ENCODE measurements at regions of chr3 and their contacts with region 1.

Region 1: DNA sequence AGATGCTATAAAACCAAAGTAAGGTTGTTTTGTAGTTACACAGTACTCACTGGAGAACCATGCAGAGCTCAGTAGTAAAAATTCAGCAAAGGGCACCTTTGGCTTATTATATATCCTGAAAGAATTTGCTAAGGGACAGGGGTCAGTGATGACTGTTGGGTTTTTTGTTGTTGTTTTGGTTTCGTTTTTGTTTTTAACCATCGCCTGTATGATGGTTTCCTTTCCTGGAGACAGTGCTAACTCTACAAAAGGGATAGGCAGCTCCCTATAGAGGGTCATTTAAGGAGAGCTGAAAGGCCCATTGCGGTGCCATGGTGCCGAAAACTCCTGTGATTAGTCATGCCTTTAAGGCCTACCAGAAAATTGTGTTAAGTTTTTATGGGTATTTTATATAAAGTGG is 118.2 kb upstream of the GOLIM4 start:
- DNase-seq: no peak
- ATAC-seq: no peak
- H3K4me3 Mint-ChIP-seq: no peak overlapping the region
- H3K27ac Mint-ChIP-seq: no peak overlapping the region
- H3K4me1 Mint-ChIP-seq: peaks cover 4% of the 10 kb centered on the region
- H3K27me3 Mint-ChIP-seq: no peaks in the 10 kb centered on the region
- CTCF ChIP-seq: no peak

Region 2: GRCh38 chr3:167318991-167319615 is 894.8 kb before region 1 on chr3:
- CTCF ChIA-PET with region 1: no interaction called
- POLR2A ChIA-PET with region 1: no interaction called
- intact Hi-C with region 1: no loop called
- DNase-seq: no peak
- ATAC-seq: no peak
- H3K4me3 Mint-ChIP-seq: no peak overlapping the region
- H3K27ac Mint-ChIP-seq: no peak overlapping the region
- H3K4me1 Mint-ChIP-seq: no peaks in the 10 kb centered on the region
- H3K27me3 Mint-ChIP-seq: no peaks in the 10 kb centered on the region
- CTCF ChIP-seq: no peak

Region 3: DNA sequence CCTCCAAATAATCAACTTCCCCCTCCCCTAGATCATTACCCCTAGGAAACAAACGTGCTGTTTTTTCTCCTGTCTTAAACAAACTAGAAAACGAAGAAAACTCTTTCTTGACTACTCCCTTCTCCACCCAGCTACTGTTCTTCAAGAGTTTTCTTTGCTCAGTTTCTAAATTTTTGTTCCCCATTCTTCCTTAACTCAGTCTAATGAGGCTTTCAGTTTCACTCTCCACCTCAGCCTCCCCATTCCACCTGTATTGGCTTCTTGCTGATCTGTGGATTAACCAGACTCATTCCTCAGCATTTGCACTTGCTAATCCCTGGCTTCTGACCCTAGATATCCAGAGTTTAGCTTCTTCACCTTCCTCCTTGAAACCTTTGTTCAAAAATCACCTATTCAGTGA is 451.6 kb before region 1 on chr3:
- CTCF ChIA-PET with region 1: no interaction called
- POLR2A ChIA-PET with region 1: no interaction called
- intact Hi-C with region 1: no loop called
- DNase-seq: no peak
- ATAC-seq: no peak
- H3K4me3 Mint-ChIP-seq: peak overlapping the region; percentile 39
- H3K27ac Mint-ChIP-seq: peak overlapping the region; percentile 74
- H3K4me1 Mint-ChIP-seq: peaks cover 11% of the 10 kb centered on the region
- H3K27me3 Mint-ChIP-seq: no peaks in the 10 kb centered on the region
- CTCF ChIP-seq: no peak

Region 4: DNA sequence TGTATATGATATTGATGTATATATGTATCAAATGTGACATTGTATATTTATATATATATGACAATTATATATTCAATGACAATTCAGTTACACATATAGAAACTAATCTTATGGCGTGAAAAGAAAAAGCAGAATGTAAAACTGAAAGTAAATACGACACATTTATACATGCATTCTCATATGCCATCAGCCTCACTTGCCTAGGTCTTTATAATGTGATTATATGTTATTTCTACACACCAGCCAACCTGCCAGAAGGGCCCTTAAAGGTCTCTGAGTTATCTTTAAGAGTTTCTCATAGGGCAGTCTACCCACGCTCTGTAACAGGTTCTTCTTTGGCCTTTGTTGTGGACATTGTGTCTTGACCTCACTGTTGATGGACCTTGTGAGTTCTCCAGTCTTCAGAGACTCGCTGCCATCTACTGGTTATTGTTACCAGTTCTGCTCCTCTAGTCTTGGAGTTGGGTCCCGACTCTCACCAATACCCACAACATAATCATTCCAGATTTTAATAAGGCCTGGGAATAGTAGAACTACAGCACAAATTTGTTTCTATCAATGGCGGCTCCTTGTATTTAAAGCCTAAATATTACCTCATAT is 253.3 kb after region 1 on chr3:
- CTCF ChIA-PET with region 1: no interaction called
- POLR2A ChIA-PET with region 1: no interaction called
- intact Hi-C with region 1: loop called (anchors 5 kb)
- DNase-seq: no peak
- ATAC-seq: no peak
- H3K4me3 Mint-ChIP-seq: peak overlapping the region; percentile 20
- H3K27ac Mint-ChIP-seq: no peak overlapping the region
- H3K4me1 Mint-ChIP-seq: peaks cover 4% of the 10 kb centered on the region
- H3K27me3 Mint-ChIP-seq: no peaks in the 10 kb centered on the region
- CTCF ChIP-seq: no peak

Region 5: GRCh38 chr3:168497741-168498140 is 283.8 kb after region 1 on chr3:
- CTCF ChIA-PET with region 1: no interaction called
- POLR2A ChIA-PET with region 1: no interaction called
- intact Hi-C with region 1: no loop called
- DNase-seq: no peak
- ATAC-seq: no peak
- H3K4me3 Mint-ChIP-seq: no peak overlapping the region
- H3K27ac Mint-ChIP-seq: no peak overlapping the region
- H3K4me1 Mint-ChIP-seq: no peaks in the 10 kb centered on the region
- H3K27me3 Mint-ChIP-seq: no peaks in the 10 kb centered on the region
- CTCF ChIP-seq: no peak

Region 6: GRCh38 chr3:168596175-168596823 is 382.4 kb after region 1 on chr3:
- CTCF ChIA-PET with region 1: no interaction called
- POLR2A ChIA-PET with region 1: no interaction called
- intact Hi-C with region 1: no loop called
- DNase-seq: no peak
- ATAC-seq: no peak
- H3K4me3 Mint-ChIP-seq: no peak overlapping the region
- H3K27ac Mint-ChIP-seq: no peak overlapping the region
- H3K4me1 Mint-ChIP-seq: no peaks in the 10 kb centered on the region
- H3K27me3 Mint-ChIP-seq: no peaks in the 10 kb centered on the region
- CTCF ChIP-seq: no peak

Region 7: GRCh38 chr3:168847291-168847883 is 633.5 kb after region 1 on chr3:
- CTCF ChIA-PET with region 1: interaction called, 13 read pairs
- POLR2A ChIA-PET with region 1: no interaction called
- intact Hi-C with region 1: no loop called
- DNase-seq: no peak
- ATAC-seq: no peak
- H3K4me3 Mint-ChIP-seq: no peak overlapping the region
- H3K27ac Mint-ChIP-seq: no peak overlapping the region
- H3K4me1 Mint-ChIP-seq: no peaks in the 10 kb centered on the region
- H3K27me3 Mint-ChIP-seq: peaks cover 3% of the 10 kb centered on the region
- CTCF ChIP-seq: no peak

Region 8: DNA sequence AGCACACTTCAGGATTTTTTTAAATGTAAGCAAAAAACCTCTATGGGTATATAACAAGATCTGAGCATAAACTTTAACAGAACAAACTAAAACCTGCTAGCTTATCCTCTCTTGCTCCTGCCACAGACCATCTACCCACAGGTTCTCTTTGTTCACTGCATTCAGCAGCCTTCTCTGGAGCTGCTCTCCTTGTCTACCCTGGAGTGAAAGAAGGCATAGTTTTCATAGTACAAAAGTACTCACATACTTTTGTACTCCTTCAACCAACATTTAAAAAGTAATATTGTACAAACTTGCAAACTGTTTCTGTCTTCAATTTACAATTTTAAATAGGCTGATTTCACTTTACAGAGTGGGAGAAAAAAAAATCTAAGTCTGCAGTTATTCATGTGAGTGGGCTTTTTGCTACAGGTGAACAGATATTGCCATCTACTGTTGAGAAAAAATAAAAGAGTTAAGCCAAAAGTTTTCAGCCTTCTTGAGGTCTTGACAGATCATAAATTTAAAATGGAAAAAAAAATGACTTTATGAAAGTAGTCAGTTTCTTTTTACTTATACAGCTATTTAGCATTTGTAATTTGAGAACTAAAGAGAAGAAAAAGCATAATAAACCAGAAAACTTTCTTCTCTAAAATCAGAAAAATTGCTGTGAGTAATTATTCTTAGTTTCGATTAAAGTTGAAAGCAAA is 1530.6 kb after region 1 on chr3:
- CTCF ChIA-PET with region 1: no interaction called
- POLR2A ChIA-PET with region 1: no interaction called
- intact Hi-C with region 1: loop called (anchors 2 kb)
- DNase-seq: no peak
- ATAC-seq: no peak
- H3K4me3 Mint-ChIP-seq: no peak overlapping the region
- H3K27ac Mint-ChIP-seq: no peak overlapping the region
- H3K4me1 Mint-ChIP-seq: no peaks in the 10 kb centered on the region
- H3K27me3 Mint-ChIP-seq: peaks cover 17% of the 10 kb centered on the region
- CTCF ChIP-seq: no peak